ENCODE measurements at regions of chr21 and their contacts with region 1.

Region 1: GRCh38 chr21:36255663-36256062 is 64.3 kb upstream of the MORC3 start:
- DNase-seq: no peak
- H3K4me3 ChIP-seq: no peak overlapping the region
- H3K27ac ChIP-seq: no peak overlapping the region
- H3K4me1 ChIP-seq: no peaks in the 10 kb centered on the region
- H3K27me3 ChIP-seq: no peaks in the 10 kb centered on the region
- CTCF ChIP-seq: no peak
- POLR2A ChIP-seq: no peak

Region 2: DNA sequence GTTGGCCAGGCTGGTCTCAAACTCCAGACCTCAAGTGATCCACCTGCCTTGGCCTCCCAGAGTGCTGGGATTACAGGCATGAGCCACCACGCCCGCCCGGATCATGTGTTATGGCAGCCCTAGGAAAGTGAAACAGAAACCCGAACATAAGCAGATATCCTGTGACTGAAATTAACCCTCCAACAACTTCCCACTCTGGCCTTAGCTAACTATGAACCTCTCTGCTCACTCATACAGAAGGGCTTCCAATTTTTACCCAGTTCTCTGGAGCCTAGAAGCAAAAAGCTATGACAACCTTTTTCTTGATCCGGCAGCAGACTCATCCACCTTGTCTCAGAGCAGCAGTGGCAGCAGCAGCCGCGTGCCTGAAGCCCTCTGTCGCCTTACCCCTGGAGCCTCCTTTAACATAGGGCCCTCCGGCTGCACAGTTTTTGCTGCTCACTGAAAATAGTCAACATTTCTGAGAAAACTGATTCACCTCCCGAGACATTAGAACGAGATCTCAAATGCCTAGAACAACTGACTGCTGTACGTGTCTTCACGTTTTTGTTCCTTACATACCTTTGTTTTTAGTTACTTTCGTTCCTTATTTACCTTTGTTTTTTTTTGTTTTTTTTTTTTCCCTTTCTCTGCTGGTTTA is 176.5 kb before region 1 on chr21:
- intact Hi-C with region 1: no loop called
- DNase-seq: no peak
- H3K4me3 ChIP-seq: no peak overlapping the region
- H3K27ac ChIP-seq: no peak overlapping the region
- H3K4me1 ChIP-seq: no peaks in the 10 kb centered on the region
- H3K27me3 ChIP-seq: no peaks in the 10 kb centered on the region
- CTCF ChIP-seq: no peak
- POLR2A ChIP-seq: no peak

Region 3: DNA sequence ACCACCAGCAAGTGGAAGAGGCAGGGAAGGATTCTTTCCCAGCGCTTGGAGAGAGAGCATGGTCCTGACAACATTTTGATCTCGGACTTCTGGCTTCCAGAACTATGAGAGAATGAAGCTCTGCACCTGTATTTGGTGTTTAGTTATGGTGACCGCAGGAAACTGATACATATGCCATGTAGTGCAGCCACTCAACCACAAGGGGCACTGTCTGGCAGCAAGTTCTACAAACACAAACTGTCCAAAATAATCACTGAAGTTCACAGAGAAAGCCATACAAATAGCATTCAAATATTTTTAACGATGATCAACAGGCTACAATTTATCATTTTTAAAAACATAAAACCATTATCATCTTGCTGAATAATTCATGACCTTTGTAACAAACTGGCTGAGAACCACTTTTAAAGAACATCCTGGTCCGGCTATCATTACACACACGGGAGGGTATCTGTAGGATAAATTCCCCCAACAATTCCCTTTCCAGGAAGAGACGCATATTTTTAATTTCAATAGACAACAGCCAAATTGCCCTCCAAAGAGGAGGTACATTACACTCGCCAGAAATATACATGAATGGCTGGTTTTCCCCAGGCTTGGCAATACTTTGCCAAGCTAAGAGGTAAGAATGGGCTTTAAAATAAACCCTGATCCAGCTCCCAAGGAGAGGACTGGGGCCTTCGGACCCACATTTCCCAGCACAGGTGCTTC is 130.0 kb before region 1 on chr21:
- intact Hi-C with region 1: no loop called
- DNase-seq: peak; percentile 54
- H3K4me3 ChIP-seq: no peak overlapping the region
- H3K27ac ChIP-seq: peak overlapping the region; percentile 77 to 84
- H3K4me1 ChIP-seq: peaks cover 16% of the 10 kb centered on the region
- H3K27me3 ChIP-seq: no peaks in the 10 kb centered on the region
- CTCF ChIP-seq: peak; percentile 80 to 88 (median 83)
- POLR2A ChIP-seq: no peak

Region 4: DNA sequence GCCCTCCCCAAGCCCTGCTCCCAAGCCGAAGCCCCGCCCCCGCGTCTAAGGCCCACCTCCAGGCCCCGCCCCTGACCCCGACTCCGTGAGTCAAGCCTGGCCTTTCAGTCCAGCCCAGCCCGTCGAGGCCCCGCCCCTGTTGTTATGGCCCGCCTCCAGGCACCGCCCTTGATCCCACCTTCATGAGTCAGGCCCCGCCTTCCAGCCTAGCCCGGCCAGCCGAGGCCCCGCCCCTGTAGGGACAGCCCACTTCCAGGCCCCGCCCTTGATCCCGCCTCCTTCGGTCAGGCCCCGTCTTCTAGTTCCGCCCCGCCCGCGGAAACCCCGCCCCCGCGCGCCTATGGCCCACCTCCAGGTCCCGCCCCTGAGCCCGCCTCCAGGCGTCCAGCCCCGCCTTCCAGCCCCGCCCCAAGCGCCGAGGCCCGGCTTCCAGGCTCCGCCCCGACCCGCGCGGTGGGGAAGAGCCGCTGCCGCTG is 99.3 kb before region 1 on chr21:
- intact Hi-C with region 1: loop called (anchors 10 kb)
- DNase-seq: peak; percentile 100
- H3K4me3 ChIP-seq: peak overlapping the region; percentile 95 to 98
- H3K27ac ChIP-seq: peak overlapping the region; percentile 86 to 93
- H3K4me1 ChIP-seq: no peaks in the 10 kb centered on the region
- H3K27me3 ChIP-seq: no peaks in the 10 kb centered on the region
- CTCF ChIP-seq: no peak
- POLR2A ChIP-seq: no peak

Region 5: DNA sequence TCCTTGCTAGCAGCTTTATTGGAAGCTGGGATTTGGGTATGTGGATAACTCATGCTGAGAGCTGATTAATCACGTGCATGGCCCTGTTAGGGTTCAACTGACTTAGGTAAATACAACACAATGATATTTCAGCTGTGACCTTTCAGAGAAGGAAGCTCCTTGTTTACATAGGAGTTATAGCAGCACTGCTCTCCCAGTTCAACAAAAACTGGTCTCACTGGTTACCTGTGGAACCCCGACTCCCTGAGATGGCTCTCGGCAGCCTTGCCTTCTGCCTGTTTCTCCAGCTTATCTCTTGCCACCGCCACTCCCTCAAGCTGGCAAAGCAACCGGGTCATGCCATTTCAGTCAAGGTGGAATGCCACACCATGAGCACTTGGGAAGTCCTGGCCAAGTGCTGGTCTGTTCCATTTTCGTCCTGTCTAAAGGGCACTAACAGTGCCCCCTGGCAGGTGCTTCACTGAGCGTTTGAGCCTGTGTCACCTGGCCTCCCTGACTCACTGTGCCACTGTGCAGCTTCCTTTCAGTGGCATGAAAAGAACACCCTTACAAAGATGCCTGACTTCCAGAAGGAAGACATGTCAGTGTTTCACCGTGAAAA is 67.5 kb before region 1 on chr21:
- intact Hi-C with region 1: no loop called
- DNase-seq: peak; percentile 69
- H3K4me3 ChIP-seq: no peak overlapping the region
- H3K27ac ChIP-seq: peak overlapping the region; percentile 71 to 74
- H3K4me1 ChIP-seq: peaks cover 10% of the 10 kb centered on the region
- H3K27me3 ChIP-seq: no peaks in the 10 kb centered on the region
- CTCF ChIP-seq: peak in 1 of 4 experiments; percentile 7
- POLR2A ChIP-seq: no peak

Region 6: GRCh38 chr21:36369064-36369685 is 113.5 kb after region 1 on chr21:
- intact Hi-C with region 1: no loop called
- DNase-seq: no peak
- H3K4me3 ChIP-seq: no peak overlapping the region
- H3K27ac ChIP-seq: no peak overlapping the region
- H3K4me1 ChIP-seq: no peaks in the 10 kb centered on the region
- H3K27me3 ChIP-seq: no peaks in the 10 kb centered on the region
- CTCF ChIP-seq: no peak
- POLR2A ChIP-seq: no peak